Endothelial cell of umbilical vein (primary cell): ENCODE measurements at regions of chr9 and their contacts with region 1.

Region 1: GRCh38 chr9:81588148-81588871 is 101.0 kb downstream of the TLE1 start:
- DNase-seq: peak; percentile 94
- H3K4me3 ChIP-seq: no peak overlapping the region
- H3K27ac ChIP-seq: peak overlapping the region; percentile 84
- H3K4me1 ChIP-seq: peaks cover 20% of the 10 kb centered on the region
- H3K27me3 ChIP-seq: no peaks in the 10 kb centered on the region
- CTCF ChIP-seq: no peak
- POLR2A ChIP-seq: no peak

Region 2: GRCh38 chr9:81292056-81292735 is 296.1 kb before region 1 on chr9:
- CTCF ChIA-PET with region 1: no interaction called
- POLR2A ChIA-PET with region 1: no interaction called
- dilution Hi-C with region 1: no loop called
- intact Hi-C with region 1: no loop called
- DNase-seq: no peak
- H3K4me3 ChIP-seq: no peak overlapping the region
- H3K27ac ChIP-seq: no peak overlapping the region
- H3K4me1 ChIP-seq: no peaks in the 10 kb centered on the region
- H3K27me3 ChIP-seq: no peaks in the 10 kb centered on the region
- CTCF ChIP-seq: no peak
- POLR2A ChIP-seq: no peak

Region 3: GRCh38 chr9:81431641-81432040 is 156.7 kb before region 1 on chr9:
- CTCF ChIA-PET with region 1: no interaction called
- POLR2A ChIA-PET with region 1: no interaction called
- dilution Hi-C with region 1: no loop called
- intact Hi-C with region 1: no loop called
- DNase-seq: peak; percentile 29
- H3K4me3 ChIP-seq: no peak overlapping the region
- H3K27ac ChIP-seq: no peak overlapping the region
- H3K4me1 ChIP-seq: no peaks in the 10 kb centered on the region
- H3K27me3 ChIP-seq: no peaks in the 10 kb centered on the region
- CTCF ChIP-seq: no peak
- POLR2A ChIP-seq: no peak

Region 4: DNA sequence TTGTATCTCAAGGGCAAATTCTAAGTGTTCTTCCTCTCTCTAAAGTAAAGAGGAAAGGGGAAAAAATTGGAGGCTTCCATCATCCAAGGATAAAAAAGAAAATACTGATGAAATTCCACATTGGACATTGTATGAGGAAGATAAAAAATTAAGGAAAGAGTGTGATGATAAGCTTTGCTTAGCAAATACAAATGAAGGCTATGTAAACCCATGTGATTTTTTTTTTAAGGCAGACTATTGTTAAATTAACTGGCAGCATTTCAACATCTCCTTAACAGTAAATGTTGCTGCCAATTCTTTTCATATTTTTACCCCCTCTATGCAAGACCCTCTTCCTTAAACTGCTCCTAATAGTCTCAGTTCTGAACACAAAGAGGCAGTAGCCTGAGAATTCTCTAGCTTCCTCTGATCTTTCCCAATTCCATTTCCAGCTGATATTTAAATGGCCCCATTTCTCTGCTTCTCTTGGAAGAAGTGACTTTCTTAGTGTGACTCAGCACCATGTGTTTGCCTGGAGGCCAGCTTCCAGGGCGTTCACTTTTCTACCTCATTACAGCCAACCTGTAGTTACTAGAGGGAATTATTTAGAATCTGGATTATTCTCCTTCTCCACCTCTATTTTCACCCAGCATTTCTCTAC is 58.6 kb before region 1 on chr9:
- CTCF ChIA-PET with region 1: interaction called, 3 read pairs
- POLR2A ChIA-PET with region 1: no interaction called
- dilution Hi-C with region 1: no loop called
- intact Hi-C with region 1: loop called (anchors 2 kb)
- DNase-seq: peak; percentile 89
- H3K4me3 ChIP-seq: no peak overlapping the region
- H3K27ac ChIP-seq: peak overlapping the region; percentile 15
- H3K4me1 ChIP-seq: peaks cover 10% of the 10 kb centered on the region
- H3K27me3 ChIP-seq: no peaks in the 10 kb centered on the region
- CTCF ChIP-seq: no peak
- POLR2A ChIP-seq: no peak

Region 5: DNA sequence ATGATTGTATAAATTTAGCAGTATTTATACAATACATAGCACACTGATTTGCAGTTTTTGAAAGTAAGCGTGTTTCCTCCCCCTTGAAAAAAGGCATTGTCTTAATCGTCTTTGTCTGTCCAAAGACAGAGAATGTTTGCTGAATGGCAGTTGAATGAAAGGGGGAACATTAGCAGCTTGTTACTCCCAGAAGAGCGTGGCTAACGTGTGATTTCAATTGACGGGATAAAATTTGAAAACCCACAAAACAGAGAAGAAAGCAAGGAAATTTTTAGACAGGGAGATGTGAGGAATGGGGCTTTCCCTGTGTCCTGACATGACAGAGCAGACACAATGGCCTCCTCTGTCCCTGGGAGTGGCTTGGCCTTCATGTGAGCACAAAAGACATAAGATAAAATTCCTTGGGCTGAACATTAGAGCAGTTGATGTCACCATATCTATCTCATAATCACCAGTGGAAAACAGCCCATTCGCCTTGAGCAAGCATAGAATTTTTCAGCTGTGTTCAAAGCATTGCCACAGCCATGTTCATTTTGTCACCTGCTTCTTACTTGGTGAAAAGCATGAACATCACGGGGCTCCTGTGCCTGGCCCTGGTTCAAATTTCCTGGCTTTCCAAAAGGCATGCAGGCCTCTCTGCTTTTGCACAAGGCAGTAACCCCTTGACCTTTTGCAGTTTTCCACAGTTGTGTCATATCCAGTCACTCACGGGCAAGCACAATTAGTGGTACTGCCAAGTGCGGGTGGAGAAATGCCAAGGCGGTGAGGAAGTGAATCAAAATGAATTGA is 25.9 kb before region 1 on chr9:
- CTCF ChIA-PET with region 1: no interaction called
- POLR2A ChIA-PET with region 1: no interaction called
- dilution Hi-C with region 1: no loop called
- intact Hi-C with region 1: loop called (anchors 1 kb)
- DNase-seq: peak; percentile 91
- H3K4me3 ChIP-seq: no peak overlapping the region
- H3K27ac ChIP-seq: peak overlapping the region; percentile 66
- H3K4me1 ChIP-seq: peaks cover 28% of the 10 kb centered on the region
- H3K27me3 ChIP-seq: no peaks in the 10 kb centered on the region
- CTCF ChIP-seq: no peak
- POLR2A ChIP-seq: no peak

Region 6: DNA sequence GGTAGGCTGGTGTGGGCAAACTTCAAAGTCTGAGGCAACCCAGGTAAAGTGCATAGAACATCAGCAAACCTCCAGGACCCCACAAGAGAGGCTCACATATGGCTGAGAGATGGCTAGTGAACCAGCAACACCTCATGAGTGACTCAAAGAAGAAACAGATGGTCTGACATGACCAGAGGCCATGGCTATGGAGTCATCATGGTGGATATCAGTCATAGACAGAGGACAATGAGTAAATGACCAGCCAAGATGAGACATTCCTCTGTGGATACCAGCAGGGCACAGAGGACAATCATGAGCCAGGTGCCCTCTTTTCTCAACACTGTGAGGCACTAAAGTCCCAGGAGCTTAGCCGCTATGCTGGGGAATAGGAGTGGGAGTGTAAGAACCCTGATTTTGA is 1293.8 kb after region 1 on chr9:
- CTCF ChIA-PET with region 1: no interaction called
- POLR2A ChIA-PET with region 1: no interaction called
- dilution Hi-C with region 1: no loop called
- intact Hi-C with region 1: loop called (anchors 10 kb)
- DNase-seq: peak; percentile 24
- H3K4me3 ChIP-seq: no peak overlapping the region
- H3K27ac ChIP-seq: peak overlapping the region; percentile 64
- H3K4me1 ChIP-seq: peaks cover 24% of the 10 kb centered on the region
- H3K27me3 ChIP-seq: no peaks in the 10 kb centered on the region
- CTCF ChIP-seq: no peak
- POLR2A ChIP-seq: no peak